ENCODE measurements at regions of chr6 and their contacts with region 1.

Region 1: DNA sequence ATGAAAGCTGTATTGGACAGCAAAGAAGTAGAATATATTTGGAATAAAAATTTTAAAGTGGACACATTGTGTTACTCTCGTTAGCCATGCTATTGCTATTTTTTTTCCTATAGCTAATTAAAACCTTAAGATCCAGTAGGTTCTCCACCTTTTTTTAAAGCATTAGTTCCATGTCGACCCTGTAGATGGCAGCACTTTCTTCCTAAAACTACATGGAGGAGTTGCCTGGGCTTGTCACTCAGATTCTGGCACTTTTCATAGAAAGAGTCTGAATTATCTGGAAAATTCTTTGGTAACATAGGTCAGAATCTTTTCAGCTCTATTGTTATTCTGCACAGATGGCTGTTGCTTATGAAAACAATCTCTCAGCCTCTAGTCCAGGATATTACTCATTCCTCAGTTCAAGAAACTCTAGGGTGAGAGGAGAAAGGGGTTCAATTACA is 42.0 kb upstream of the ESR1 start:
- DNase-seq: peak in 1 of 2 donors; percentile 53
- ATAC-seq: peak; percentile 85
- H3K4me3 ChIP-seq: no peak overlapping the region
- H3K27ac ChIP-seq: no peak overlapping the region
- H3K4me1 ChIP-seq: no peaks in the 10 kb centered on the region
- H3K27me3 ChIP-seq: no peaks in the 10 kb centered on the region

Region 2: GRCh38 chr6:151807533-151808370 is 42.3 kb after region 1 on chr6 and contains the start of gene ESR1:
- intact Hi-C with region 1: loop called in 1 of 2 experiments (anchors 5 kb)
- DNase-seq: peak; percentile 48 to 78
- ATAC-seq: peak; percentile 53
- H3K4me3 ChIP-seq: peak within 1 kb of the TSS; percentile 9 to 40
- H3K27ac ChIP-seq: peak within 1 kb of the TSS in 1 of 2 donors; percentile 21
- H3K4me1 ChIP-seq: no peaks in the 10 kb centered on the region
- H3K27me3 ChIP-seq: no peaks in the 10 kb centered on the region
- total RNA-seq, gene ESR1: 4.1 to 12.3 TPM

Region 3: DNA sequence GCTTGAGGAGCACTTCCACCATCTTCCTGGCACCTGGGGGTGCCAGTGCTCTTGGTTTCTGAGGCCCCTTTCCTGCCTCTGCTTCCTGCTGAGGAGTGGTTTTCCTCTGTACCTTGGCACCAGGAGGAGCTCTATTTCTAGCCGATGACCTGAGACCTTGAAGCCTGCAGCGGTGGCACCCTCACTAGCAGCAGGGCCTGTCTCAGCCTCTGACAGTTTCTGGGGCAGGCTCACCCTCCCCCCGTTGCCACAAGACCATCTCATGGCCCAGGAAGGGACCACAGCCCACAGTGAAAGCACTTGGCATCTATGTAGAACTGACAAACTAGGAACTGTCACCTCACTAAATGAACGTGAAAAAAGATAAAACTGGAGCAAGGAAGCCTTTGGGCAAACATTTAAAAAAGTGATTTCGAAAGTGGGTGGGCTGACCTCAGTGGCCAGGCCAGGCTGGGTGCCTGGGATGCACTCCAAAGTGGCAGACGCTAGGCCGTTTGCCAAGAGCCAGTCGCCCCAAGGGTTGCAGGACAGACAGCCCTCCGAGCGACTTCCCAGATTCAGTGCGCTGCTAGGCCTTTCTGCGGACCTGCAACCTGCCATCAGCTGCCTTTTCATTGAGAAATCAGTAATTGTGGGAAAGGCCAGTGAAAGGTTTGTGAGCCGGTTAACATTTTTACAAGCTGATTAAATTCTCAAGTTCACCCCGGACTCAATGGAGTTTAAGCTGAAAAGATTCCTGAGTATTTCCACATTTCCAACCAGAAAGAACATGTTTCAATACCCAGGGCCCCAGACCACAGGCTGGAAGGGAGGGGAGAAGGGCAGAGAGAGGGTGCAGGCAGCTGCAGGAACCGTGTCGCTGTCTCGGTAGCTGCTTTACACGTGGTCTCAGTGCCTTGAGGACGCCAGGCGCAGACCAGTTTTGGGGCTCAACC is 345.7 kb after region 1 on chr6:
- intact Hi-C with region 1: loop called in 1 of 2 experiments (anchors 5 kb)
- DNase-seq: peak in 1 of 2 donors; percentile 76
- ATAC-seq: peak; percentile 53
- H3K4me3 ChIP-seq: no peak overlapping the region
- H3K27ac ChIP-seq: peak overlapping the region in 1 of 2 donors; percentile 88
- H3K4me1 ChIP-seq: peaks cover 0 to 6% of the 10 kb centered on the region in 2 donors
- H3K27me3 ChIP-seq: no peaks in the 10 kb centered on the region

Region 4: DNA sequence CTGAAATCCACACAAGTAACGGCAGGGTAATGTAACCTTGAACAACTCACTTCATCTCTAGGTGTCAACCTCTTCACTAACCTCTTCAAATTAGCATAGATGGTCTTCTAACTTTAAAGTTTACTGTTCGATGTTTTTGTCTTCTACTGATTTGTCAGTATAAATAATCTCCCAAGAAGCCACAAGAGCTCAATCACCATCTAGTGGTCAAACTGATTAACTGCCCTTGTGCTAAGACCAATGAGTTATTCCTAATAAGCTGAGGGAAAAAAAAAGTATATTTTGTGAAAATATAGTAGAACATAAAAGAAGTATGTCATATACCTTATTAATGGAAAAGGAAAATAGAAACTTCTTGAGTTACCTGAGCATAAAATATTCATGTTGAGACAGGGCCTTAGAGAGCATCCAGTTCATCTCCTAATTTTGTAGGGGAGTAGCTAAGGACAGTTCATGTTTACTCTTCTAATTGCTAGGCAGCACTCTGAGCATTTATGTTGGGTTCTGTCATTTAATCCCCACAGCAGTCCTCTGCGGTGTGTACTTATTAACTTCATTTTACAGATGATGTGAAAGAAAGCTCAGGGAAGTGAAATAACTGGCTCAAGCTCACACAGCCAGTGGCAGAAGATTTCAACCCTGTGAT is 359.1 kb after region 1 on chr6:
- intact Hi-C with region 1: loop called (anchors 5 kb)
- DNase-seq: no peak
- ATAC-seq: no peak
- H3K4me3 ChIP-seq: no peak overlapping the region
- H3K27ac ChIP-seq: no peak overlapping the region
- H3K4me1 ChIP-seq: peaks cover 0 to 3% of the 10 kb centered on the region in 2 donors
- H3K27me3 ChIP-seq: no peaks in the 10 kb centered on the region

Region 5: DNA sequence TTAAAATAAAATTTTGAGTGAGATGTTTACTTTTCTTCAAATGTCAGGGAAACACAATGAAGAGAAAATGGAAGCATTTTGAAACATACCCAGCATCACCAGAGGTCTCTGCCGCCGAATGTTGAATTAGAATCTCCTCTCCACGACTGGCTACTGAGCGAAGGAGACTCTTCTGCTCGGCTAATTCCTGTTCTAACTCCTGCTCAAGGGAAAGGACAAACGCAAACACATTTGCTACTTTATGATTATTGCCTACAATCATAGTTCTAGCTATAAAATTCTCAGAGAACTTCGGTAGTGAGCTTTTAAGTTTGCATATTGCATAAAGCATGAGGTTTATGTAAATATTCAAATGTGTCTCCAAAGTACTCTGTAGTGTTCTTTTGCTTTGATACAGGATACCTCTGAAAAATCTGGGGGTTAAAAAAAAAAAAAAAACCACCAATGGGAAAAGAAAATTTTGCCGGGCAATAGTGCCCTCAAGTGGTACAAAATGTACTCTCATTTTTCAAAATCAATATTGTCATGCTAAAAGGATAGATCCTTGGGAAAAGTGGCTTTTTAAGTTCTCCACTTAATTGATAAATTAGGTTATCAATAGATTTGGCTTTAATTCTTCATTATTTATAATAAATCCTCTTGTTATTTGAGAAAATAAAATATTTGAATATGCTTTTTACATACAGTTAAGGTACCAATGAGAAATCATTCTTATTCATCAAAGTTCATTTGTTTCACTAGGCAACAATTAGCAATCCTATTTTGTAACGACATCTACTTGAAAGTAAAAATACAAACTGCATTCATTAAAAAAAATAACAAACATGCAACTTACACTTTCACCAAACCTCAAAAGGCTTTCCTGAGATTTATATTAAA is 502.7 kb after region 1 on chr6:
- intact Hi-C with region 1: loop called in 1 of 2 experiments (anchors 5 kb)
- DNase-seq: no peak
- ATAC-seq: no peak
- H3K4me3 ChIP-seq: no peak overlapping the region
- H3K27ac ChIP-seq: no peak overlapping the region
- H3K4me1 ChIP-seq: peaks cover 5 to 8% of the 10 kb centered on the region in 2 donors
- H3K27me3 ChIP-seq: no peaks in the 10 kb centered on the region

Measured in aorta (tissue), 5 donors.